SK-N-SH (cell line): ENCODE measurements at regions of chr4 and their contacts with region 1.

Region 1: GRCh38 chr4:150867148-150867547 is 147.9 kb downstream of the LRBA start:
- DNase-seq: peak; percentile 62
- H3K4me3 ChIP-seq: no peak overlapping the region
- H3K27ac ChIP-seq: no peak overlapping the region
- H3K4me1 ChIP-seq: no peaks in the 10 kb centered on the region
- H3K27me3 ChIP-seq: no peaks in the 10 kb centered on the region
- CTCF ChIP-seq: peak; percentile 75
- EP300 ChIP-seq: no peak
- RAD21 ChIP-seq: peak; percentile 89

Region 2: DNA sequence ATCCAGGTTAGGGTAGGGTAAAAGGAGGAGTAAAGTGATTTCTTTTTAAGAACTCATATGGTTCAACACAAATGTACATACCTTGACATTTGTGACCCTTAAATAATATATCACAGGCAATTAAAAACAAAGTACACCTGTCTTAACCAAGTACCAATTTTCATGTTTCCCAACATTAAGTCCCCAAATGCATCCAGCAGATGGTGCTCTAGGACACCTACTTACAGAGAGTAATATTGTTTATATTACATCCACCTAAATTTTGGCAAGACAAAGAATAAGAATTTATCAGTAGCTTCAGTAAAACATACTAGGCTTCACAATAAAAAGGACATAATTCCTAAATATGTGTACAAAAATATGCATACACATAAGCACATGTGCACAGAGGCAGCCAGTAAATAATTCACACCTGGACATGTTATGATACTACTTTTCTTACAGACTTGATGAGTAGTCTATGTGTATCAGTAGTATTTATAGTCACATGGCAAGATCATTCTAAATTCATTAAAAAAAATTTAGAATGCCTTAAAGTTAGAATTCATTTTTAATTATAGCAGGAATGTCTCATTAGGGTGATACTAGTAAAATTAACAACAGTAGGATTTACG is 569.2 kb before region 1 on chr4:
- CTCF ChIA-PET with region 1: interaction called, 71 read pairs
- POLR2A ChIA-PET with region 1: no interaction called
- DNase-seq: peak; percentile 34
- H3K4me3 ChIP-seq: no peak overlapping the region
- H3K27ac ChIP-seq: no peak overlapping the region
- H3K4me1 ChIP-seq: peaks cover 0 to 3% of the 10 kb centered on the region in 2 experiments; a peak in 1 of 4 replicates
- H3K27me3 ChIP-seq: no peaks in the 10 kb centered on the region
- CTCF ChIP-seq: peak; percentile 89
- EP300 ChIP-seq: no peak
- RAD21 ChIP-seq: peak; percentile 89

Region 3: DNA sequence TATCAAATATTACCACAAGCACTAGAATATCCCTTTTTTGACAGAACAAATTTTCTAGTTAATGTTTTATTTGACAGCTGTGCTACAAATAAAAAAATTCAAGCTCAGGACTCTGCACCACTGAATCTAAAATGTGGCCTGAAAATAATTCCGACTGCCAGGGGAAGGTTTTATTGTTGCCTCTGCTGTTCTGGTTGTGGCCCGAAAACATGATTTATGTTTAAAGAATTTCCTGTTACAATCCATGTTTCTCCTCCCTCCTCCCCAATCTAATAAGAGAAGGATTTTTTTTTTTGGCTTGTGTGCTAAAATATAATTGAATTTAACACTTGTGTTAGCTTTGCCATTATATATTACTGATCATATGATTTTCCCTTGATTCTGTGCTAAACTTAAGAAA is 561.2 kb before region 1 on chr4:
- CTCF ChIA-PET with region 1: interaction called, 29 read pairs
- POLR2A ChIA-PET with region 1: no interaction called
- DNase-seq: no peak
- H3K4me3 ChIP-seq: no peak overlapping the region
- H3K27ac ChIP-seq: peak overlapping the region; percentile 39 to 71; a peak in 3 of 4 replicates
- H3K4me1 ChIP-seq: peaks cover 6 to 38% of the 10 kb centered on the region in 2 experiments; a peak in 3 of 4 replicates
- H3K27me3 ChIP-seq: no peaks in the 10 kb centered on the region
- CTCF ChIP-seq: no peak
- EP300 ChIP-seq: peak; percentile 10 to 57; a peak in 2 of 4 replicates
- RAD21 ChIP-seq: no peak

Region 4: DNA sequence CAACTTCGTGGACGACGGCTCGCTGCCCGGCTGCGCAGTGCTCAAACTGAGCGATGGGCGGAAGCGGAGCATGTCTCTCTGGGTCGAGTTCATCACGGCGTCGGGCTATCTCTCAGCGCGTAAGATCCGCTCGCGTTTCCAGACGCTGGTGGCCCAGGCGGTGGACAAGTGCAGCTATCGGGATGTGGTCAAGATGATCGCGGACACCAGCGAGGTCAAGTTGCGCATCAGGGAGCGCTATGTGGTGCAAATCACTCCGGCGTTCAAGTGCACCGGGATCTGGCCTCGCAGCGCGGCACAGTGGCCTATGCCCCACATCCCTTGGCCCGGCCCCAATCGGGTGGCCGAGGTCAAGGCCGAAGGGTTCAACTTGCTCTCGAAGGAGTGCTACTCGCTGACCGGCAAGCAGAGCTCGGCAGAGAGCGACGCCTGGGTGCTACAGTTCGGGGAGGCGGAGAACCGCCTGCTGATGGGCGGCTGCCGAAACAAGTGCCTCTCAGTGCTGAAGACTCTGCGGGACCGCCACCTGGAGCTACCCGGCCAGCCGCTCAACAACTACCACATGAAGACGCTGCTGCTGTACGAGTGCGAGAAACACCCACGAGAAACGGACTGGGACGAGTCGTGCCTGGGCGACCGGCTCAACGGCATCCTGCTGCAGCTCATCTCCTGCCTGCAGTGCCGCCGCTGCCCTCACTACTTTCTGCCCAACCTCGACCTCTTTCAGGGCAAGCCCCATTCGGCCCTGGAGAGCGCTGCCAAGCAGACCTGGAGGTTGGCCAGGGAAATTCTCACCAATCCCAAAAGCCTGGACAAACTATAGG is 283.6 kb before region 1 on chr4:
- CTCF ChIA-PET with region 1: interaction called, 17 read pairs
- POLR2A ChIA-PET with region 1: no interaction called
- DNase-seq: peak; percentile 59
- H3K4me3 ChIP-seq: peak overlapping the region; percentile 70 to 87
- H3K27ac ChIP-seq: peak overlapping the region; percentile 19 to 71; a peak in 3 of 4 replicates
- H3K4me1 ChIP-seq: peaks cover 3 to 32% of the 10 kb centered on the region in 2 experiments; a peak in 3 of 4 replicates
- H3K27me3 ChIP-seq: no peaks in the 10 kb centered on the region
- CTCF ChIP-seq: no peak
- EP300 ChIP-seq: no peak
- RAD21 ChIP-seq: no peak

Region 5: GRCh38 chr4:150855981-150856510 is 11.1 kb before region 1 on chr4:
- CTCF ChIA-PET with region 1: interaction called, 13 read pairs
- POLR2A ChIA-PET with region 1: no interaction called
- DNase-seq: no peak
- H3K4me3 ChIP-seq: no peak overlapping the region
- H3K27ac ChIP-seq: no peak overlapping the region
- H3K4me1 ChIP-seq: no peaks in the 10 kb centered on the region; a peak in 1 of 4 replicates
- H3K27me3 ChIP-seq: no peaks in the 10 kb centered on the region
- CTCF ChIP-seq: no peak
- EP300 ChIP-seq: no peak
- RAD21 ChIP-seq: no peak